Dendritic cell treated with granulocyte-macrophage colony-stimulating factor and Interleukin-4, amounts not matched to agents 40 ng/mL and 50 ng/mL, for 4 days (primary cell): ENCODE measurements at regions of chr4 and their contacts with region 1.

Region 1: DNA sequence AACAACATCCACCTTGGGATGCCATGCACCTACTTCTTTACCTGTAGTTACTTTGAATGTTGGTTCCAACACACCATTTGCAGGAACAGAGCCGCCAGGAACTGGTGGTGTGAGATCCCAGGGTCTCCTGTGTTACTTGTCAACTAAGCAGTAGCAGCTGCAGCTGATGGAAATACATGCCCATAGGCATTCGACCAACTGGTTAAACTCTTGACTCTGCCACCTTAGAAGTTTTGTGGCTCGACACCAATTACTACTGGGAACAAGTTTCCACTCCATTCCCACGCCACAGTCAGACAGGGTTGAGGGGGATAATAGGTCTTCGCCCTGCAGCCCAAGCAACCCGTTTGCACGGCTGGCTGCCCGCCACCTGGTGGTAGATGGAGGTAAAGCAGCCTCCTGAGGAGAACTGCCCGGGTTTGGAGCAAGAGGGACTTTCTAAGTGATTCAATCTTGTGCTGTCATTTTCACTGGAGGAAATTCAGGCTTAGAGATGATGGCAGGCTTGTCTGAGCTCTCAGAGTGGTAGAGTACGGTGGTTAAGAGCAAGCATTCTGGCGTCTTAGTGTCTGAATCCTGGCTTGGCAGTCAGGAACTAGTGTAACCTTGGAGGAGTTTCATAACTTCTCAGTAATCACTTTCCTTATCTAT is 119.1 kb upstream of the TRIM2 start:
- H3K4me3 Mint-ChIP-seq: no peak overlapping the region
- H3K27ac Mint-ChIP-seq: no peak overlapping the region
- H3K4me1 Mint-ChIP-seq: peaks cover 24% of the 10 kb centered on the region
- H3K27me3 Mint-ChIP-seq: peaks cover 14% of the 10 kb centered on the region

Region 2: GRCh38 chr4:153127760-153128494 is 42.8 kb after region 1 on chr4:
- intact Hi-C with region 1: loop called (anchors 2 kb)
- H3K4me3 Mint-ChIP-seq: no peak overlapping the region
- H3K27ac Mint-ChIP-seq: no peak overlapping the region
- H3K4me1 Mint-ChIP-seq: no peaks in the 10 kb centered on the region
- H3K27me3 Mint-ChIP-seq: peaks cover 10% of the 10 kb centered on the region